ENCODE measurements at regions of chr14 and their contacts with region 1.

Region 1: GRCh38 chr14:25140411-25140810 is 90.5 kb upstream of the STXBP6 start:
- DNase-seq: no peak
- ATAC-seq: no peak
- H3K4me3 ChIP-seq: no peak overlapping the region
- H3K27ac ChIP-seq: no peak overlapping the region
- H3K4me1 ChIP-seq: no peaks in the 10 kb centered on the region
- H3K27me3 ChIP-seq: no peaks in the 10 kb centered on the region
- CTCF ChIP-seq: no peak

Region 2: DNA sequence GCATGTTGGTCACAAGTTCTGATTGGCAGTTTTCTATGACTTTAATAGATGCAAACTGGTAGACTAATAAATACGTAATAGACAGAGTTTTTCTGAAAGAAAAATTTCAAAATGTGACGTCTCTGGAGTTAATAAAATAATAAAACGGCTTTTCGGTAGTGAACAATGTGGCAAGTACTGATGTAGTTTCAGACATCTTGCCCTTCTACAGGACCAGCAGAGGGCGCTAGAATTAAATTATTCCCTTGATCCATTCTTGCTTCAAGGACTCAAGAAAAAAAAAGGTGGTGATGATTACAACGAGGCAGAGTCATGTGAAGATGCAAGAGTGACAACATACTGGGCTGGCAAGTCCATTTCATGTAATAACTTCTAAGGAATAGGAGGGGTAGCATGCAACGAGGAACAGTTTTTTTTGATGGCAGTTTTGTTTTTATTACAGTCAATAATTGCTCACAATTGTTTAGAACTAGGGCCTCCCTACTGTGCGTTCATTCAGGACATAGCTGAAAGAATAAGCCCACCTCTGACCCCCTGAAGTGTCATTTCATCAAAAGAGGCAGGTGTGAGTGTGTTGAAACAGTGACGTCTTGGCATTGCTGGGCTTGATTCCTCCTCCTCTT is 405.4 kb before region 1 on chr14:
- intact Hi-C with region 1: loop called in 1 of 3 experiments (anchors 10 kb)
- DNase-seq: peak in 3 of 6 donors; percentile 13 to 45 (median 28)
- ATAC-seq: peak in 3 of 4 donors; percentile 81 to 85 (median 84)
- H3K4me3 ChIP-seq: no peak overlapping the region
- H3K27ac ChIP-seq: no peak overlapping the region
- H3K4me1 ChIP-seq: no peaks in the 10 kb centered on the region
- H3K27me3 ChIP-seq: no peaks in the 10 kb centered on the region
- CTCF ChIP-seq: peak; percentile 26 to 71 (median 62)

Region 3: DNA sequence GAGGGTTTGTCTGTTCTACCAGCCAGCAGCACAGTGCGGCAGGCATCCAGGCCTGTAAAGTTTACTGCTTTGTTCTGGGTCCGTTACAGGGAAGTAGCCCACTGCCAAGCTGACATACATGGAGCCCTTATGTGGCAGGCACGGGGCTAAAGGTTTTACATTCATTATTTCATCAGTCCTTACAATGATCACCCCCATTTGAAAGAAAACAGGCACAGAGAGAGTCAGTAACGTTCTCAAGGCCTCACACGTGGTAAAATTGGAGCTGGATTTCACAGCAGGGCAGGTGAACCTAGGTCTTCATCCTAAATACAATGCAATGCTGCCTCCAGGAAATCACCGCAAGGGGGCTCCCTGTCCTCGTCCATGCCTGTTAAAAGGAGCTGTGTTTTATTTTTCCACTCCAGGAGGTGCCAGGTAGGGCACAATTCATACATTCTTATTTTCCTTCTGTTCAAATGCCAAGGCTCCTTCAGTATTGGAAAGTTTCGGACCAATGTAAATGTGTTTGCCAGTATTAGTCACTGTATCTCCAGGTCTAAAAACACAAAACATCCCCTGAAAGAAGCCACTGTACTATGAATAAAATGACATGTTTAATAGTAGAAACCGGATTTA is 334.2 kb before region 1 on chr14:
- intact Hi-C with region 1: loop called in 1 of 3 experiments (anchors 5 kb)
- DNase-seq: peak; percentile 70 to 85 (median 78)
- ATAC-seq: peak; percentile 87 to 92 (median 90)
- H3K4me3 ChIP-seq: no peak overlapping the region
- H3K27ac ChIP-seq: peak overlapping the region in 2 of 4 donors; percentile 38 to 50
- H3K4me1 ChIP-seq: peaks cover 6 to 32% (median 22%) of the 10 kb centered on the region in 3 donors
- H3K27me3 ChIP-seq: no peaks in the 10 kb centered on the region
- CTCF ChIP-seq: peak; percentile 60 to 89 (median 74)

Region 4: GRCh38 chr14:25006961-25007795 is 133.2 kb before region 1 on chr14:
- intact Hi-C with region 1: no loop called
- DNase-seq: peak in 1 of 6 donors; percentile 23
- ATAC-seq: peak; percentile 91 to 97 (median 94)
- H3K4me3 ChIP-seq: no peak overlapping the region
- H3K27ac ChIP-seq: peak overlapping the region; percentile 20 to 63 (median 34)
- H3K4me1 ChIP-seq: peaks cover 18 to 35% (median 26%) of the 10 kb centered on the region in 3 donors
- H3K27me3 ChIP-seq: no peaks in the 10 kb centered on the region
- CTCF ChIP-seq: no peak

Measured in pancreas (tissue), 10 donors.